HCT116 (cell line): ENCODE measurements at regions of chr18 and their contacts with region 1.

Region 1: DNA sequence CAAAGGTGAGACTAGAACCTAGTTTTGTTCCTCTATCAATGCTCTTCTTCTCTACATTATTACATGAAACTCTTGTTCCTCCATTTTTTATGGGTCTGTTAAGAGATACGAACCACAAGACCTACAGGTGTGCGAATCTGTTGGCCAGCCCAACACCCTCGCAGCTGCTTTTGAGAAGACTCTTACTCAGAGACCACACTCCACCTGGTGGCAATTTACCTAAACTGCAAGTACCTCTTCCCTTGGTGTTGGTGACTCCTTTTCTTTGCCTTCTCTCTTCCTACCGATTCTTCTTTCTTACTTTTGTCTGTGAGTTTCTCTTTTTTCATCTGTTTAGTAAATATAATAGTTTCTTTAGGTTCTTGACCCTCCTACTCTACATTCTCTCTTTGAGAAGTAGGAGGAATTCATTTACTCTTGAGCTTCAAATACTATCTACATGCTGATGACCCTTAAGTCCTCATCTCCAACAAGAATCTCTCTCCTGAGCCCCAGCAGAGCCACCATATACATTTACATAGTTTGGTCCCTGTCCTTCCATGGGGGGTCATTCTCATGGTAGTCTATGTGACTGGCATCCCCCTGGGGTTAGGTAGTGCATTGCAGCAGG is 81.8 kb upstream of the GAREM1 start:
- DNase-seq: peak; percentile 74
- ATAC-seq: peak; percentile 85
- H3K4me3 ChIP-seq: no peak overlapping the region
- H3K27ac ChIP-seq: no peak overlapping the region
- H3K4me1 ChIP-seq: peaks cover 0 to 5% of the 10 kb centered on the region in 2 experiments; a peak in 1 of 4 replicates
- H3K27me3 ChIP-seq: no peaks in the 10 kb centered on the region
- CTCF ChIP-seq: peak; percentile 68 to 78 (median 69)
- POLR2A ChIP-seq: no peak
- RAD21 ChIP-seq: peak; percentile 82

Region 2: DNA sequence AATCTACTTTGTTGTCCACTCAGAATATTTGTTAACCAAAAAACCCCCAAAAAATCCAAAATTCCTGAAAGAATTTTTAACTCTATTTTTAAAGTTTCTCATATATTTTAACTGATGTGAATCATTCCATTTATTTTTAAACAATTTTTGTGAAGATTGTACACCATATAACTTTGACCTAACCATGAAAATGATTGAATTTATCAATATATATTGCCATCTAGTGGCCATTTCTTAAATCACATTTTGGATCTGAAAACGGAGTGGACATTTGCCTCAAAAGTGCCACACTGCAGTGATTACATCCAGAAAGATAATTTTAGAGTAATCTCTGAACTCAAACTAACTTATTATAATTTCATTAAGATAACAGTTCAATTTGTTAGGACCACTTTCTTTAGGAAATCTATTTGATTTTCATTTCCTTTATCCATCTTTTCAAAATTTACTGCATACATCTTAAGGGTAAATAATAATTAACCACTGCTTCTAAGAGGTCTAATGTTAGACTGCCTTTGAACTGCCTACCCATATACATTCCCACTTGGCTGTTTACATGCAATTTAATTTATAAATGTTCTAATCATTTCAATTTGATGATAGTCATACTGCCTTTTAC is 1581.1 kb before region 1 on chr18:
- CTCF ChIA-PET with region 1: no interaction called
- POLR2A ChIA-PET with region 1: no interaction called
- RAD21 ChIA-PET with region 1: no interaction called
- intact Hi-C with region 1: loop called (anchors 10 kb)
- DNase-seq: peak; percentile 34
- ATAC-seq: peak; percentile 75
- H3K4me3 ChIP-seq: no peak overlapping the region
- H3K27ac ChIP-seq: no peak overlapping the region
- H3K4me1 ChIP-seq: peaks cover 0 to 4% of the 10 kb centered on the region in 2 experiments; a peak in 2 of 4 replicates
- H3K27me3 ChIP-seq: no peaks in the 10 kb centered on the region
- CTCF ChIP-seq: peak; percentile 25 to 66 (median 33); a peak in 4 of 6 replicates
- POLR2A ChIP-seq: no peak
- RAD21 ChIP-seq: peak; percentile 48

Region 3: GRCh38 chr18:32158108-32158624 is 394.4 kb before region 1 on chr18:
- CTCF ChIA-PET with region 1: interaction called, 87 read pairs
- POLR2A ChIA-PET with region 1: interaction called, 3 read pairs
- RAD21 ChIA-PET with region 1: interaction called, 10 to 13 read pairs
- intact Hi-C with region 1: loop called (anchors 1 kb)
- DNase-seq: peak; percentile 85
- ATAC-seq: peak; percentile 98
- H3K4me3 ChIP-seq: 0 out of 4 replicates have a peak overlapping the region, but pooled peaks of 1 of the 2 experiments have one; percentile 20
- H3K27ac ChIP-seq: no peak overlapping the region
- H3K4me1 ChIP-seq: peaks cover 4 to 16% of the 10 kb centered on the region in 2 experiments; a peak in 3 of 4 replicates
- H3K27me3 ChIP-seq: no peaks in the 10 kb centered on the region
- CTCF ChIP-seq: peak; percentile 75 to 86 (median 76)
- POLR2A ChIP-seq: no peak
- RAD21 ChIP-seq: peak; percentile 94

Region 4: GRCh38 chr18:32289483-32290075 is 262.9 kb before region 1 on chr18:
- CTCF ChIA-PET with region 1: interaction called, 24 read pairs
- POLR2A ChIA-PET with region 1: no interaction called
- RAD21 ChIA-PET with region 1: interaction called in 1 of 2 experiments, 3 read pairs
- intact Hi-C with region 1: loop called (anchors 1 kb)
- DNase-seq: peak; percentile 63
- ATAC-seq: peak; percentile 95
- H3K4me3 ChIP-seq: no peak overlapping the region
- H3K27ac ChIP-seq: no peak overlapping the region
- H3K4me1 ChIP-seq: peaks cover 0 to 2% of the 10 kb centered on the region in 2 experiments; a peak in 1 of 4 replicates
- H3K27me3 ChIP-seq: no peaks in the 10 kb centered on the region
- CTCF ChIP-seq: peak; percentile 72 to 82 (median 82); a peak in 5 of 6 replicates
- POLR2A ChIP-seq: no peak
- RAD21 ChIP-seq: peak; percentile 73

Region 5: GRCh38 chr18:32461709-32462272 is 90.7 kb before region 1 on chr18:
- CTCF ChIA-PET with region 1: no interaction called
- POLR2A ChIA-PET with region 1: no interaction called
- RAD21 ChIA-PET with region 1: no interaction called
- intact Hi-C with region 1: no loop called
- DNase-seq: no peak
- ATAC-seq: no peak
- H3K4me3 ChIP-seq: no peak overlapping the region
- H3K27ac ChIP-seq: no peak overlapping the region
- H3K4me1 ChIP-seq: no peaks in the 10 kb centered on the region
- H3K27me3 ChIP-seq: no peaks in the 10 kb centered on the region
- CTCF ChIP-seq: peak in 1 of 3 experiments; percentile 31; a peak in 2 of 6 replicates
- POLR2A ChIP-seq: no peak
- RAD21 ChIP-seq: no peak

Region 6: DNA sequence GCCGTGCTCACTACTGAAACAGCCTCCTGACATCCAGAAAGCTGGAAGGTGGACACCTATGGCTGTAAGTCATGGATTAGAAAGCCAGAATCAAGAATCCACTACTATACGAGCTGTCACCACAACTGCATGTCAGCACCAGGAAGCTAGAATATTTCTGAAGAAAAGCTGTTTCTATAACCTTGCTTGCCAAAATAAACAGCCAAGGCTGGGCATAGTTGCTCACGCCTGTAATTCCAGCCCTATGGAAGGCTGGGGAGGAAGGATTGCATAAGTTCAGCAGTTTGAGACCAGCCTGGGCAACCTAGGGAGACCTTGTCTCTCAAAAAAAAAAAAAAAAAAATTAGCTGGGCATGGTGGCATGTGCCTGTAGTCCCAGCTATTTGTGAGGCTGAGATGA is 14.4 kb after region 1 on chr18:
- CTCF ChIA-PET with region 1: interaction called, 12 read pairs
- POLR2A ChIA-PET with region 1: no interaction called
- RAD21 ChIA-PET with region 1: no interaction called
- intact Hi-C with region 1: no loop called
- DNase-seq: no peak
- ATAC-seq: no peak
- H3K4me3 ChIP-seq: no peak overlapping the region
- H3K27ac ChIP-seq: no peak overlapping the region
- H3K4me1 ChIP-seq: no peaks in the 10 kb centered on the region
- H3K27me3 ChIP-seq: no peaks in the 10 kb centered on the region
- CTCF ChIP-seq: no peak
- POLR2A ChIP-seq: no peak
- RAD21 ChIP-seq: no peak